AG04450 (cell line): ENCODE measurements at regions of chr7 and their contacts with region 1.

Region 1: DNA sequence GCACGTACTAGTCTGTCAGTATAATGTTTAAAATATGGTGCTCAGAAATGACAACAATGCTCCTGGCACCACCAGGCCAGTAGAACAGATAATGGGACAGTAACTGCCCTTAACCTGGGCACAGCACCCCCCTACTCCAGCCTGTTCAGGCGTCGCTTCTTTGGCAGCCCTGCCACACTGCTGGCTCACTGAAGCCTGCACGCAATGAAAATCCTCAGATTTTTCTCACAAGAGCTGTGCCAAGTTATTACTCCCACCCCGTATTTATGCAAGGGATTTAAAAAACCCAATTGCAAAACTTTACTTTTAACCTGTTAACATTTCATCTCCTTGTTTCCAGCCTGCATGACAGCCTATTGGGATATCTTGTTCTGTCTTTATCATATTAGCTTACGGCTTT is 56.6 kb upstream of the LAMB1 start:
- DNase-seq: no peak
- H3K4me3 ChIP-seq: no peak overlapping the region
- H3K27ac ChIP-seq: no peak overlapping the region
- H3K27me3 ChIP-seq: no peaks in the 10 kb centered on the region
- CTCF ChIP-seq: no peak

Region 2: DNA sequence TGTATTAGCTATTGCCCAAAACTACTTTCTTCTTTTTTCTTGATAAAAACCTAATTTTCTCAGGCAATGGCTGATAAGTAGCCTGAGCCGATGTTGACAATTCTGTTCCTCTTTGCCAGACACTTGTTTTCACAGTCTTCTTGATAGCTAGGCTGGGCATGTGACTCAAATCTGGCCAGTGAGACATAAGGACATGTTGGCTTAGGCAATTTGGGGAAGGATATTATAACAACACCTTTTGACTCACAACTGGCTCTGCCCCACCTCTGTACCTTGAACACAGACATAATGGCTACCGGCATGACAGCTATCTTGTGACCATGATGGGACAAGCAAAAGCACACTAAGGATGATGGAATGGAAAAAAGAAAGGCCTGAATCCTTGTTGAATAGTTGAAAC is 662.5 kb before region 1 on chr7:
- CTCF ChIA-PET with region 1: interaction called, 10 read pairs
- POLR2A ChIA-PET with region 1: no interaction called
- DNase-seq: no peak
- H3K4me3 ChIP-seq: no peak overlapping the region
- H3K27ac ChIP-seq: no peak overlapping the region
- H3K27me3 ChIP-seq: no peaks in the 10 kb centered on the region
- CTCF ChIP-seq: no peak

Region 3: DNA sequence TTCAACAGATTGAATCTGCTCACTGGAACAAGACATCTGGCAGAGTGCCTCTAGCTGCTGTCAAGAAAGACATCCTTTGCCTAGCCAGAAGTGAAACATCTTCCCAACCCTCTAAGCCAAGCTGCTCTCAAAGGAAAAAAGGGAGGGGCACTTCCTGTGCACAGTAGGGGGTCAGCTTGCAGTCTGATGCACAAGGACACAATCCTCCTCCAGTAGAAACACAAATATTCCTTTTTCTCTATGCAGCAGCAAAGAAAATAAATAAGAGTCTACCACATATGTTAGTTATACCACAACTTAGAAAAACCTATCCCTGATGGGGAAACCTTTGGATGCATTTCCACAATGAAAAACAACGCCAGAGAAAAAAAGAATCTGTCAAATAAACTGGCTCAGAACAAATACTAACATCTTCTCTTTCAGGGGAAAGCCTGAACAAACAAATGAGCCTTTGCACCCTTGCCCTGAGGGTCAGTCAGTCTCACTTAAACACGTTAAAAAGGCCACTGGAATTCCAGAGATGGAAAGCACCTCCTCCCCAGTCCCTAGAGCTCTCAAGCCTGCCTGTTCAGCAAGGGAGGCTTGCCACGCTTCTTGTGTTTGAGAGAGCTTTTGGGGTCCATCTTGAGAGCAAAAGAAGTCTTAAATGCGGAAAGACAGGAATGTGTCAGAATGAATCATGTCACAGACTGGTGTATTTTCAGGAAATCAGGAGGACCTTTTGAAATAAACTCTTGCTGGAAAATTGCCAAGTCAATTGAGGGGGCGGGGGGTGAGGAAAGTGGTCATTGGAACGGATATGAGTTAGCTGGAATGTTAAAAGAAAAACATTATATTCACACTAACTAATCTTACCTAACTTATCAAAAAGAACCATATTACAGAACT is 64.1 kb before region 1 on chr7:
- CTCF ChIA-PET with region 1: no interaction called
- POLR2A ChIA-PET with region 1: interaction called, 12 read pairs
- DNase-seq: no peak
- H3K4me3 ChIP-seq: no peak overlapping the region
- H3K27ac ChIP-seq: peak overlapping the region; percentile 86
- H3K27me3 ChIP-seq: no peaks in the 10 kb centered on the region
- CTCF ChIP-seq: no peak

Region 4: GRCh38 chr7:108270385-108271015 is 211.0 kb after region 1 on chr7:
- CTCF ChIA-PET with region 1: no interaction called
- POLR2A ChIA-PET with region 1: no interaction called
- DNase-seq: no peak
- H3K4me3 ChIP-seq: no peak overlapping the region
- H3K27ac ChIP-seq: no peak overlapping the region
- H3K27me3 ChIP-seq: no peaks in the 10 kb centered on the region
- CTCF ChIP-seq: no peak